ENCODE measurements at regions of chr13 and their contacts with region 1.

Region 1: GRCh38 chr13:19927117-19927748 is 31.3 kb upstream of the ZMYM2 start:
- DNase-seq: peak; percentile 42
- CTCF ChIP-seq: peak; percentile 22

Region 2: DNA sequence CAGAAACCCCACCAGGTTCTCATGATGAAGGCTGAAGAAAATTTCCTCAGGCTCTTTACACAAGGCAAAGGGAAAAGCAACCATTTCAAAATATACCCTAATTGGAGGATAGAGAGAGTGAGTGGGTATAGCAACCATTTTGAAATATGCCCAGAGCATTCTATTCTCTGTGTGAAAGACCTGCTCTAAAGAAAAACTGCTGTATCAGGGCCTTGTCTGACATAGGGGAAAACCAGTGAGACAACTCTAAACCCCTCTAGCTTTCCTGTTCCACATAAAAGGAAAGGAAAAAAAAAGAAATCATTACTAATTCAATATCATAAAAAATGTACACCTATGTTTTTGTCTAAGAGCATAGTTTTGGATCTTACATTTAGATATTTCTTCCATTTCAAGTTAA is 408.2 kb before region 1 on chr13:
- in situ Hi-C with region 1: no loop called
- DNase-seq: no peak
- CTCF ChIP-seq: no peak

Region 3: GRCh38 chr13:19845758-19846157 is 81.5 kb before region 1 on chr13:
- in situ Hi-C with region 1: loop called (anchors 25 kb)
- DNase-seq: no peak
- CTCF ChIP-seq: no peak

Region 4: DNA sequence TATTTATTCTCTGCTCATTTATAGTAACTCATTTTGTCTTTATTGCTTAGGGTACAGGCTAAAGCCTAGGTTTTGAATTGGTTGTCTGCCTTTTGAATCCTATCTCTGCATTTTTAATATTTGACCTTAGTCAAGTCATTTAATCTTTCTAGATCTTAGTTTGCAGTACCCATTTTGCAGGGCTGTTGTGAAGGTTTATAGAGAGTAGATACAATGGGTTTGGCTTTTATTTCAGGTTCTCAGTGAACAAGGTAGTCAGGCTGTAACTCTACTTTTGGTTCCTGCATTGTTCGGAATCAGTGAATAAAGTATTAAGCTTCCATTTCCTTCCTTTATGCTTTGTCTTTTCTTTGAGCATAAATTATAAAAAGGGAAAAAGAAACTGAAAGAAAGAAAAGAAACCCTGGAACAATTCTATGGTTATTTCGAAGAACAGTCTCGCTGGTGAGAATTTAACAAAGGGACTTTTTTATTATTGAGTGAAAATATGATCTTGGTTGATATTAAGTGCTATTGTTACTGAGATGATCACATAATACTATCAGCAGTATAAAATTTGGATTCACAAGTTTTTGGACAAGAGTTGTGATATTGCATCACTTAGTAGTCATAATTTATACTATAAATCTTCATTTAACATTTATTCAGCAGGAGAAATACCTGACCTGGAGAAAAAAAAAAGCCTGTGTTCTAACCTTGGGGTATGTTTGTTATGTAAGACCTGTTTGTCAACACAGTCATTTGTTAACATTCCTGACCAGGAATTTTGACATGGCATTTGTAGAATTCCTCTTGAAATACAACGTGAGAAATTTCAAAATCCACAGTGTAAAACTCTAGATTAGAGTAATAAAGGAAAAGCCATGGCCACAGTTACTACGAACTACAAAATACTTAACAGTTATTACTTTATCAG is 122.6 kb after region 1 on chr13:
- in situ Hi-C with region 1: no loop called
- DNase-seq: no peak
- CTCF ChIP-seq: no peak

Region 5: DNA sequence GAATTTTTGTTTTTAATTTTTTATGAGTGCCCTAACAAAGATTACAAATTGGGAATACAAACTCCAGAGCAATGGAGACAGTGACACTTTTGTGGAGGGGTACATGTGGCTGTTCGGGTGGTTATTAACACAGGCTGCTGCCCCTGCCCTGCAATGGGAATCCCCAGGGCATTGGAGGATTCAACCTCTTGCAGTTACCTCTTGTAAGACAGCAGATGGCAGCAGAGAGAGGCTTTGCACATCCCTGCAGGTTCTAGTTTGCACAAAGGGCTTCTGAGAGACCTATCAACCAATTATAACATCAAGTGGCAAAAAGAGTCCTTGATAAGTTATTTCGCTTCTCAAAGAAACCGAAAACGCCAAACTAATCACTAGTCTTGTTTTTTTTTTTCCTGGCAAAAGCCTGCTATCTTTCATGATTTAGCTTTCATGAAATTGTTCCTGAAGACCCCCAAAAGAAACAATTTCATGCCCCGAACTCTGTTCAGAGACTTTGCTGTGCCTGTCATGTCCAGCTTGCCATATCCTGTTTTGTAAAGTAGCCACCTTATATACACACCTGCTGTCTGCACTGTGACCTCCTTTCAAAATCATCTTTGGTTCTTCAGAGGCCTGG is 255.1 kb after region 1 on chr13:
- in situ Hi-C with region 1: no loop called
- DNase-seq: peak; percentile 82
- CTCF ChIP-seq: peak; percentile 78

Measured in GM13976 (cell line).